Gastrocnemius medialis (tissue), 4 donors: ENCODE measurements at regions of chr3 and their contacts with region 1.

Region 1: DNA sequence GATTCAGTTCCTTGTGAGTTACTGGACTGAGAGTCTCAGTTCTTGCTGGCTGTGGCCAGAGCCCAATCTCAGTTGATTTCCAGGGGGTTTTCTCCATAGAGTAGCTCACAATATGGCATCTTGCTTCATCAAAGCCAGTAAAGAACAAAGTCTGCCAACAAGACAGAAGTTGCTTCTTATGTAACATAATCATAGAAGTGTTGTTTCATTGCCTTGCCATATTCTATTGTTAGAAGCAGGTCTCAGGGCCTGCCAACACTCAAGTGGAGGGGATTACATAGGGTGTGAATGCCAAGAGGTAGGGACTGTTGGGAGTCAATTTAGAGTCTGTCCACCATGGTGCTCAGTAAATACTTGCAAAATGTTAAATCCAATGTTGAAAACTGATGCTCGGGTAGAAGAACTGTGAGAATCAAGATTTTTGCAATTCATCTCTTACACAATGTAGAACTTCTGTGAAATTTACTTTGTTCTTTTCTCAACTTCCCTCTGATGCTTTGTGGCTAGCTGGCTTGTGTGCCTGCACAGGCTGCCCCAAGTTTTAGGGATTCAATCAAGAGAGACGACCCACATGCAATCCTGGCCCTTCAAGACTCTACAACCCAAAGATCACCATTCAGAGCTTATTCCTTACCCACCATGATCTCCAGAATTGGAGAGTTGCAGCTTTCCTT is 13.3 kb upstream of the PXYLP1 start:
- DNase-seq: no peak
- ATAC-seq: peak in 1 of 2 donors; percentile 66
- H3K4me3 ChIP-seq: no peak overlapping the region
- H3K27ac ChIP-seq: no peak overlapping the region
- H3K4me1 ChIP-seq: peaks cover 8 to 9% of the 10 kb centered on the region in 2 donors
- H3K27me3 ChIP-seq: no peaks in the 10 kb centered on the region
- CTCF ChIP-seq: no peak
- POLR2A ChIP-seq: no peak

Region 2: GRCh38 chr3:141279077-141279967 is 61.0 kb after region 1 on chr3:
- in situ Hi-C with region 1: loop called in 1 of 4 experiments (anchors 10 kb)
- intact Hi-C with region 1: no loop called
- DNase-seq: no peak
- ATAC-seq: peak; percentile 72 to 79
- H3K4me3 ChIP-seq: no peak overlapping the region
- H3K27ac ChIP-seq: no peak overlapping the region
- H3K4me1 ChIP-seq: no peaks in the 10 kb centered on the region
- H3K27me3 ChIP-seq: no peaks in the 10 kb centered on the region
- CTCF ChIP-seq: peak; percentile 40 to 66 (median 59)
- POLR2A ChIP-seq: no peak